ENCODE measurements at regions of chr12 and their contacts with region 1.

Region 1: GRCh38 chr12:121626087-121626852 is at the start of gene ORAI1:
- DNase-seq: peak; percentile 94
- H3K4me3 Mint-ChIP-seq: peak within 1 kb of the TSS; percentile 90
- H3K27ac Mint-ChIP-seq: peak within 1 kb of the TSS; percentile 90
- H3K4me1 Mint-ChIP-seq: peaks cover 40% of the 10 kb centered on the region
- H3K27me3 Mint-ChIP-seq: no peaks in the 10 kb centered on the region
- total RNA-seq, gene ORAI1: 47.6 and 52.6 TPM in 2 replicates

Region 2: DNA sequence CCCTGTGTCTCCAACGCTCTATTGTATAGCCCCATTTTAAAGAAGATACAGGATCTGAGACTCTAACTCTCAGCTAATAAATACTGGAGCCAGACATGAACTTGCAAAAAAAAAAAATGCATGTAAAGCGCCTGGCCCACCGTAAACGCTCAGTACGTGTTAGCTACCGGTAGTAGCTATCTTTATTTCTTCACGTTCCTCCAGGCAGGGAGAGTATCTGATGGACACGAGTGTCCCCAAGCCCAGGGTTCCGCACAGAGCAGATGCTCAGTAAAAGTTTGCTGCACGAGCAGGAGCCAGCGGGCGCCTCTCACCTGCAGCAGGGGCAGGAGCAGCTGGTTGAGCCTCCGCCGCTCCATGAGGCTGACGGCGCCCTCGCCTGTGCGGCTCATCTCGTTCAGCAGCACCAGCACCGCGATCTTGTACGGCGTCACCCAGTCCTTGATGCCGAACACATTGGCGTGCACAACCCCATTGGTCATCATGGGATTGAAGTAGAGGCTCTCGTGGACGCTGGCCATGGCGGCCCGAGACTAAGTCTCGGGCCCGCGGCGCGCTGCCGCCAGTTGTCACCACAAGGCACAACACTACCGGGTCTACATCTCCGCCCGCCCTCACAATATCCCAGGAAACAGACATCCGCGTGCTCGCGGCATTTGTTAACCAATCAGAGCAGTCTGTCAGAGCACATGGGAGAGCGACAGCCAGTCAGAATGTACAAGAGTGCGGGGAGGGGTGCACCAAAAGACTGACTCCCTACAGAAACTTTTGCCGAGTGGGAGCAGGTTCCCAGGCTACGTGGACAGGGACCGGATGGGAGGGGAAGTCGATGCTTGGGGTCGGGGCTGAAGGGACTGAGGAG is 274.2 kb before region 1 on chr12 and contains the start of gene ANAPC5:
- intact Hi-C with region 1: loop called (anchors 5 kb)
- DNase-seq: peak; percentile 92
- H3K4me3 Mint-ChIP-seq: peak within 1 kb of the TSS; percentile 95
- H3K27ac Mint-ChIP-seq: peak within 1 kb of the TSS; percentile 97
- H3K4me1 Mint-ChIP-seq: peaks cover 20% of the 10 kb centered on the region
- H3K27me3 Mint-ChIP-seq: peaks cover under 1% of the 10 kb centered on the region
- total RNA-seq, gene ANAPC5: 132 and 135 TPM in 2 replicates

Region 3: DNA sequence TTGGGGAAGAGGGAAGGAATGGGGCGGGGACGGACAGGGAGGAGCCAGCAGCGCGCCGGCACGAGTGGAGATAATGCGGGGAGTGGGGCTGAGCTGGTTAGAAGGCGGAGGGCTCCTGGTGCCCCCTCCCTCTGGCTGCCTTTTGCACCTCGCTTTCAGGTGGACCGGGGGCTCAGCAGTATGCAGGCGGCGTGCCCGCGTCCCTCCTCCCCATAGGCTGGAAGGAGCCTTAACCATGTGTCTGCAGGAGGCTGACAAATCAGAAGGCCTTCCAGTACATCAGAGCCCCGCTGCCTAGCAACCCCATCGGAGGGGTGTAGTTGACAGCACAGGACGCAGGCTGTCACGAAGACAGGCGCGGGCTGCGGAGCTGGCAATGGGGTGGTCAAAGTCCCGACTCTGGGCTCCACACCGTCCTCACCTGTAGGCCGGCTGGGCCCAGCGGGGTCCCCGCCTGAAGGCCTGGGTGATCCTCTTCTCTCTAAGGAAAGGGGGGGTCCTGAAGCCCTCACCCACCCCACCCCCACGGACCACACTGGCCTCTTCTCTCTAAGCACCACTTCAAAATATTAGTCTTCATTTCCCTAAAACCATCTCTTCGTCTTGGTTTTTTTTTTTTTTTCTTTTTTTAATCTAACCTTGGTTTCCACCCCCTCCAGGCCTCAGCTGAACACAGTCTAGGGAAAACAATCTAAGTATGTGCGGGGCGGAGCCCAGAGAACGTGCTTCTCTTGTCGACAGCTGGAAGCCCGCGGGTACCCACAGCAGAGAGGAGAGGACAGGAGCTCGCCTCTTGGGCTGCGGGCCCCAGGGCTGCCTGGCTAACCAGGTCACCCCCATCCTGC is 90.0 kb before region 1 on chr12:
- intact Hi-C with region 1: loop called (anchors 5 kb)
- DNase-seq: no peak
- H3K4me3 Mint-ChIP-seq: peak overlapping the region; percentile 74
- H3K27ac Mint-ChIP-seq: no peak overlapping the region
- H3K4me1 Mint-ChIP-seq: peaks cover 33% of the 10 kb centered on the region
- H3K27me3 Mint-ChIP-seq: no peaks in the 10 kb centered on the region

Region 4: DNA sequence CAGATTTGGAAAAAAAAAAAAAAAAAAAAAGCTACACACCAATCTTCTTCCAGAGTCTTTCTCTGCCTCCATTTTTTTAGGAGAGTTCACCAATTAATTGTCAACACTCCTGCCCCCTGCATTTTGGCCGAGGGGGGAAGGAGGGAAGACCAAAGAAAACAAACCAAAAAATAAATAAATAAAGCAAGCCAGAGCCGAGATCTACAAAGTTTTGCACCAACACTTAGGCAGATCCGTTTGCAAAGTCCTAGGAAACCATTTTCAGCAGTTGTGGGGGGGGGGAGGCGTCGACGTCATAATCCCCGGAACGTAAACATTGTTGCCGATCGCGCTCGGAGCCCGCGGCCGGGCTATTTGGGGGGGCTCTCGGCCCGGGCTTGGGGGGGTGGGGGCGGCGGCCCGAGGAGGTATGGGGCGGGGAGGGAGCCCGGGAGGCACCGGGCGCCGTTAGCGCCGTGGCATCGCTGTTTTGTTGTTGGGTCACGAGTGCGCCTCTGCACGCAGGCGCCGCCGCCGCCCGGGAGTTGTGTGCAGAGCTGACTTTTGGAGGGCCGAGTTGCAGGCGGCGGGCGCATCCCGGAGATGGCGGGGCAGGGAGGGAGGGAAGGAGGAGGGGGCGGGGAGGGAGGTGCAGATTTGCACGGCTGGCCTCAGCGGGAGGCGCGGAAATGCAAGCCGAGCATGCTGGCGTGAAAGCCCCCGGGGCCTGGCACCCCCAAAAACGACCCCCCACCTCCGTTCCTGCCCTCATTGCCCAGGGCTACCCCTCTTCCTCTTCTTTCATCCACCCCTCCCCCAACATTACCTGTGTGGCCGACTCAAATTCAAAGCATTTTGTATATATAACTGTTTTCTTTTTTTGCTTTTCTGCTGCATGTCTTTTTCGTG is 46.0 kb before region 1 on chr12:
- intact Hi-C with region 1: loop called (anchors 1 kb)
- DNase-seq: peak; percentile 70
- H3K4me3 Mint-ChIP-seq: peak overlapping the region; percentile 98
- H3K27ac Mint-ChIP-seq: peak overlapping the region; percentile 99
- H3K4me1 Mint-ChIP-seq: peaks cover 31% of the 10 kb centered on the region
- H3K27me3 Mint-ChIP-seq: no peaks in the 10 kb centered on the region

Region 5: DNA sequence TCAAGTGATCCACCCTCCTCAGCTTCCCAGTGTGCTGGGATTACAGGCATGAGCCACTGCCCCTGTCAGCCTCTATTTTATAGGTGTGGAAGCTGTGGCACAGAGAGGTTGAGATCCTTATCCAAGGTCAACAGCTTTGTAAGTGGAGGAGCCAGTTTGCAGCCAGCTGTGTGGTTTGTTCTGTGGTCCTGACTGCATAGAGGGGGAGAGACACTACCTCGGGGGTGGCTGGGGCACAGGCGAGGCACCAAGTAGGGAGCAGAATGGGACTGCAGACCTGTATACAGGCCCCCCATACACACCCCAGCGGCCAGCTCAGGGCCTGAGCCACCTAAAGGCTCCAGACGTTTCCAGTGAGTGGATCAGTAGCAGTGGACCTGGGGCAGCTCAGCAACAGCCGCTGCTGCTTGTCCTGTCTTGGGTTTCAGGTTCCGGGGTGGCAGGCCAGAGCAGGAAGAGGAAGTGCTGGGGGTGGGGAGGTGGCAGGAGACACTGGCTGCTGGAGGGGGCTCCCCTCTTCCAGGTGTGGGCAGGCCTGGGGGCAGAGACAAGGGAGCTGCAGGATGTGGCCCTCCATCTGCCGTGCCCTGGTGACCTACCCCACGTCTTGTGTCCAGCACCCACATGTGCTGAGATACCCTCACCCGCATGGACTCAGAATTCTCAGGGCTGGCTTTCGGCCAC is 11.1 kb after region 1 on chr12:
- intact Hi-C with region 1: loop called (anchors 1 kb)
- DNase-seq: no peak
- H3K4me3 Mint-ChIP-seq: peak overlapping the region; percentile 42
- H3K27ac Mint-ChIP-seq: peak overlapping the region; percentile 87
- H3K4me1 Mint-ChIP-seq: peaks cover 35% of the 10 kb centered on the region
- H3K27me3 Mint-ChIP-seq: no peaks in the 10 kb centered on the region

Region 6: GRCh38 chr12:121668750-121669520 is 42.7 kb after region 1 on chr12:
- intact Hi-C with region 1: loop called (anchors 1 kb)
- DNase-seq: peak; percentile 31
- H3K4me3 Mint-ChIP-seq: no peak overlapping the region
- H3K27ac Mint-ChIP-seq: peak overlapping the region; percentile 49
- H3K4me1 Mint-ChIP-seq: peaks cover 34% of the 10 kb centered on the region
- H3K27me3 Mint-ChIP-seq: no peaks in the 10 kb centered on the region

Region 7: GRCh38 chr12:121688966-121689365 is 62.7 kb after region 1 on chr12:
- intact Hi-C with region 1: loop called (anchors 1 kb)
- DNase-seq: no peak
- H3K4me3 Mint-ChIP-seq: no peak overlapping the region
- H3K27ac Mint-ChIP-seq: no peak overlapping the region
- H3K4me1 Mint-ChIP-seq: peaks cover 5% of the 10 kb centered on the region
- H3K27me3 Mint-ChIP-seq: no peaks in the 10 kb centered on the region

Measured in activated T-helper 2 cell treated with anti-CD3 and anti-CD28 coated beads, Interferon-gamma antibody, Interleukin-2, Interleukin-4, amounts not matched to agents 10 μg/mL and 5 μg/mL and 100 μg/mL, durations not matched to agents 14 hours and 24 hours and 36 hours (primary cell).